Activated naive CD4-positive, alpha-beta T cell treated with anti-CD3 and anti-CD28 coated beads for 36 hours (primary cell): ENCODE measurements at regions of chr7 and their contacts with region 1.

Region 1: DNA sequence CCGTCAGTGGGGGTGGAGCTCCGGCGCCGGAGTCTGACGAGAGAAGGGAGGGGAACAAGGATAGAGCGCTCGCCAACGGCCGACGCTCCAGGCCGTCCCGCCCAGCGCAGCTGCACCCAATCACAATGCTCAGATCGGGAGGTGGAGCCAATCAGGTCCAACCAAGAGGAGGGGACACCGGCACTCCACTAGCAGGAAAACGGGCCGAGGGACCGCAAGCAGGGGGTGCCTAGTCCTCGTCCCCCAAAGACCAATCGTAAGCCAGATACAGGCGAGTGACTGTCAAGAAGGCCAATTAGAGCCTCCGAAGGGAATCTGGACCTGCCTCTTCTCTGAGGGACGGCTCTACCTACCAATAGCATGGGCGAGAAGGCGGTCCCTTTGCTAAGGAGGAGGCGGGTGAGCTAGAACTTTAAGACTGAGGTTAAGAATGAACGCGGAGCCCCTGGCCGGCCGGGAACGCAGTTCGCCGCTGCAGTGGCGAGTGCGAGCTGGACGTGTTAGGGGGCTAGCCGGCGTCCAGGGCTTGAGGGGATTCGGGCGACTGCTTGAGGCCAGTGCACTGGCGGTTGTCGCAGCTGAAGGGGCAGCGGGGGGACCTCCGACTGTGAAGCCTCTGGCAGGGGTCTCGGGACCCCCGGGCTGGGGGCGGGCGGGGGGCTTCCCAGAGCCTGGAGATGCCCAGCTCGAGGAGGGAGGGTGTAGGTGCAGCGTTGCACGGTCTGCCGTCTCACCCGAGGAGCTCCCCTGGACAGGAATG is at the start of gene FBXO24:
- DNase-seq: peak; percentile 100
- H3K4me3 Mint-ChIP-seq: peak within 1 kb of the TSS; percentile 89
- H3K27ac Mint-ChIP-seq: peak within 1 kb of the TSS; percentile 97
- H3K4me1 Mint-ChIP-seq: peaks cover 27% of the 10 kb centered on the region
- H3K27me3 Mint-ChIP-seq: peaks cover 7% of the 10 kb centered on the region
- total RNA-seq, gene FBXO24: 1.5 to 2.6 TPM

Region 2: DNA sequence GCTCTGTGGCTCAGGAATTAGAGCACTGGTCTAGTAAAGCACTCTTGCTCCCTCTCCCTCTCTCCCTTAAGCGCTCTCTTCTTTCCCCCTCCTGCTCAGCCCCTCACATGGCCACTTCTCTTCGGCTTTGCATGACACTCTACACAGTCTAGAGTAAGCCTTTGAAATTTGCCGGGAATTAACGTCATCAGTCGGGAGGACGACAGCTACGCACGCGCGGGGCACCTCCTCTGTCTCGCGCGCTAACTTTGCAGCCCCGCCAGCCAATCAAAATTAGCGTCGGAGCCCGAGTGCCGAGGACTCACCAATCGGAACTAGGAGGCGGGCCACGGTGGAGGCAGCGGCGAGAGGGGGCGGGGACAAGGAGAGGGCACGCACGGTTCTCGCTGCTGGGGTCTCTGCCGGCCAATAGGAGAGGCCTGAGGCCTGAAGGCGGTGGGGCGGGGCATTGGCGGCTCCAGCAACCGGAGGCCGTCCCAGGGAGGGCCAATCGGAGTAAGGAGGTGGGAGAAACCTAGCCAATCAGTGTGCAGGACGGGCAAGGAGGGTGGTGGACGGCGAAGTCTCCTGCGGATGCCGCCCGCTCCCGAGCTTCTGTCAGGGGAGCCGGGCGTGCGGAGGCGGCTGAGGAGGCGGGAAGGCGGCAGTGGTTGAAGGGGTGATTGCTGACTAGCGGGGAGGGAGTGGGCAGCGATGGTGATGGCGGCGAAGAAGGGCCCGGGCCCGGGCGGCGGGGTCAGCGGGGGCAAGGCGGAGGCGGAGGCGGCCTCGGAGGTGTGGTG is 47.6 kb before region 1 on chr7 and contains the start of gene AGFG2:
- CTCF ChIA-PET with region 1: no interaction called
- intact Hi-C with region 1: loop called (anchors 1 kb)
- DNase-seq: peak; percentile 100
- H3K4me3 Mint-ChIP-seq: peak within 1 kb of the TSS; percentile 97
- H3K27ac Mint-ChIP-seq: peak within 1 kb of the TSS; percentile 91
- H3K4me1 Mint-ChIP-seq: peaks cover 39% of the 10 kb centered on the region
- H3K27me3 Mint-ChIP-seq: no peaks in the 10 kb centered on the region
- total RNA-seq, gene AGFG2: 23.4 to 23.9 TPM

Region 3: DNA sequence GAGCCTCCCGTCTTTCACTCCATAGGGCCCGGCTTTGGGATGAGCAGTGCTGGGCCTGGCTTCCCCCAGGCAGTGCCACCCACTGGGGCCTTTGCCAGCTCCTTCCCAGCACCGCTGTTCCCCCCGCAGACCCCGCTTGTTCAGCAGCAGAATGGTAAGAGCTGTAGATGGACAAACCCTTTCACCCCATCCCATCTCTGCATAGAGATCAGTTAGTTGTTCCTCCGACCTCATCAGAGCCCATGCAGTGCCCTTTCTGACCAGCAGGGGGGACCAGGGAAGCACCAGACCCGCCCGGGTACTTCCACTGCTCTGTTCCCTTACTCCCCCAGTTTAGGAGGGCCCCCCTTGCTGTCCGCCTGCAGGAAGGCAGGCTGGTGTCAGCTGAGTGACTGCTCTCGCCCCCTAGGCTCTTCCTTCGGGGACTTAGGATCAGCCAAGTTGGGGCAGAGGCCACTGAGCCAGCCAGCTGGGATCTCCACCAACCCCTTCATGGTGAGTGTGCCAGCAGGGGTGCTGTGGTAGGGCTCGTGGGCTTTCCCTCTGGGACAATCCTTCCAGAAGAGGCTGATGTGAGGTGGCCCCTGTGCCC is 22.5 kb before region 1 on chr7:
- CTCF ChIA-PET with region 1: interaction called, 15 read pairs
- intact Hi-C with region 1: loop called (anchors 1 kb)
- DNase-seq: peak; percentile 90
- H3K4me3 Mint-ChIP-seq: no peak overlapping the region
- H3K27ac Mint-ChIP-seq: no peak overlapping the region
- H3K4me1 Mint-ChIP-seq: peaks cover 15% of the 10 kb centered on the region
- H3K27me3 Mint-ChIP-seq: no peaks in the 10 kb centered on the region

Region 4: GRCh38 chr7:100611974-100612729 is 25.7 kb after region 1 on chr7 and contains the start of gene MOSPD3:
- CTCF ChIA-PET with region 1: interaction called, 3 read pairs
- intact Hi-C with region 1: loop called (anchors 1 kb)
- DNase-seq: peak; percentile 99
- H3K4me3 Mint-ChIP-seq: peak within 1 kb of the TSS; percentile 98
- H3K27ac Mint-ChIP-seq: peak within 1 kb of the TSS; percentile 99
- H3K4me1 Mint-ChIP-seq: peaks cover 13% of the 10 kb centered on the region
- H3K27me3 Mint-ChIP-seq: no peaks in the 10 kb centered on the region
- total RNA-seq, gene MOSPD3: 12.3 to 13.0 TPM

Region 5: GRCh38 chr7:100691676-100692577 is 105.5 kb after region 1 on chr7:
- CTCF ChIA-PET with region 1: interaction called, 30 read pairs
- intact Hi-C with region 1: loop called (anchors 1 kb)
- DNase-seq: peak; percentile 91
- H3K4me3 Mint-ChIP-seq: peak overlapping the region; percentile 98
- H3K27ac Mint-ChIP-seq: no peak overlapping the region
- H3K4me1 Mint-ChIP-seq: peaks cover 53% of the 10 kb centered on the region
- H3K27me3 Mint-ChIP-seq: no peaks in the 10 kb centered on the region